ENCODE measurements at regions of chr3 and their contacts with region 1.

Region 1: DNA sequence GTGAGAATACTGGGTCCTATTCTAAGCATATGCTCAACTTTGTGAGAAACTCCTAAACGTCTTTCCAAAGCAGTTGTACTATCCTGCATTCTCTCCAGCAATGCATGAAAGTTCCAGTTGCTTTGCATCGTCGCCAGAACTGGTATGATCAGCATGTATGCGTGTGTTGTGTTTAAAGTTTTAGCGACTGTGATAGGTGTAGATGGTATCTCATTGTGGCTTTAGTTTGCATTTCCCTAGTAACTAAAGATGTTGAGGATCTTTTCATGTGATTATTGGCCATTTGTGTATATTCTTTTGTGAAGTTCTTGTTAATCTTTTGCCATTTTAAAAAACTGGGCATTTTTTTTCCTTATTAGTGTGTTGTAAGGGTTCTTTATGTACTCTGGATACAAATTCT is 115.1 kb downstream of the SPATA16 start:
- DNase-seq: no peak
- ATAC-seq: no peak

Region 2: DNA sequence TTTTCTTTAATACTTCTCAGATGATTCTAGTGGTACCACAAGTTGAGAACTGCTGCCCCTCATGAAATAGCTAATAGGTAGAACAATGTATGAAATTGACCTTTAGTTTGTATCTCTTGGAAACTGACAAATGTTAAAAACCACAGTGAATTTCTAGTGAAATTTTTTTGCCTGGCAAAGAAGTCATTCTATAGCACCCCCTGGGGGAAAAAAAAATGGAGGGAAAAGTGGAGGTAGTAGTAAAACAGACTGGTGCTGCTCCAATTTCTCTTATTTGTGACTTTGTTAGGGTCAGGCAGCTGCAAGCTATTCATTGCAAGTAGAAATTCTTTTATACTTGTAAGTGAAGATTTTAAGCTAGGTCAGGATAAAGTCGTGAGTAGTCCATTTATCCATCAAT is 976.6 kb after region 1 on chr3:
- intact Hi-C with region 1: loop called in 1 of 2 experiments (anchors 5 kb)
- DNase-seq: no peak
- ATAC-seq: no peak

Measured in left cardiac atrium (tissue), 4 donors.